ENCODE measurements at regions of chr17 and their contacts with region 1.

Region 1: GRCh38 chr17:33750943-33751701 is 458.0 kb upstream of the ASIC2 start:
- DNase-seq: peak; percentile 16
- ATAC-seq: peak; percentile 85
- H3K4me3 ChIP-seq: no peak overlapping the region
- H3K27ac ChIP-seq: no peak overlapping the region
- H3K4me1 ChIP-seq: no peaks in the 10 kb centered on the region
- H3K27me3 ChIP-seq: no peaks in the 10 kb centered on the region; a peak in 1 of 4 replicates
- CTCF ChIP-seq: peak; percentile 88 to 91 (median 89)
- EP300 ChIP-seq: no peak
- POLR2A ChIP-seq: no peak
- RAD21 ChIP-seq: peak; percentile 87

Region 2: DNA sequence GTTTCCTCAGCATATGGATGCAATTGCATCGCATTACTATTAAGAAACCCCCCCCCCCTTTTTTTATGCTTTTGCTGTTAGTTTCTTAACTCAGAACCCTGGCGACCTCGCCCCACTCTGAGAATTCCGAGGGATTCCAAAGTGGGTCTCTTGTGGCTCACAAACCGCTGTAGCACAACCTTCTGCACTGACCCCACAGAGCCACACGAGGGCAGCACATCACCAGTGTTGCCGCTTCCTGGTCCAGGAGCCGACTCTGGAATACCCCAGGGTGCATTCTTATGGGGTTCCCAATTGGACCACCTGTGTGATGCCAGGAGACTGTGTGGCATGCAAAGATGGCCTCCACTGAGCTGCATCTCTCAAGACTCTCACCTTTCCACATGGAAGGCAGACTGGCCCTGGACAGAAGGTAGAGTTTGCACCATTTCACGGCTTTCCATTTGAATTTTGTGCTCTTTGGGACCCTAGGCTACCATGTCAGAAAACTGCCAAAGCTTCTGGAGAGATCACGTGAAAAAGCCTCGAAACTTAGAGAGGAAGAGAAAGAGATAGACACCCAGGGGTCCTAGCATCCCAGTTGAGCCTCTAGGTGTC is 25.3 kb before region 1 on chr17:
- CTCF ChIA-PET with region 1: interaction called, 62 read pairs
- POLR2A ChIA-PET with region 1: no interaction called
- RAD21 ChIA-PET with region 1: interaction called, 6 read pairs
- SMC1A ChIA-PET with region 1: interaction called, 6 read pairs
- in situ Hi-C with region 1: no loop called
- intact Hi-C with region 1: loop called (anchors 2 kb)
- DNase-seq: no peak
- ATAC-seq: peak; percentile 67
- H3K4me3 ChIP-seq: no peak overlapping the region
- H3K27ac ChIP-seq: no peak overlapping the region
- H3K4me1 ChIP-seq: no peaks in the 10 kb centered on the region
- H3K27me3 ChIP-seq: no peaks in the 10 kb centered on the region
- CTCF ChIP-seq: peak; percentile 70 to 78 (median 74)
- EP300 ChIP-seq: no peak
- POLR2A ChIP-seq: no peak
- RAD21 ChIP-seq: peak; percentile 52